Heart left ventricle (tissue), 16 donors: ENCODE measurements at regions of chr11 and their contacts with region 1.

Region 1: GRCh38 chr11:133712051-133712560 is 133.2 kb downstream of the SPATA19 start:
- DNase-seq: no peak
- ATAC-seq: peak in 2 of 4 donors; percentile 35 to 58
- H3K4me3 ChIP-seq: no peak overlapping the region
- H3K27ac ChIP-seq: peak overlapping the region in 3 of 12 donors; percentile 26 to 40 (median 29)
- H3K4me1 ChIP-seq: peaks cover 0 to 23% (median 8%) of the 10 kb centered on the region in 12 donors
- H3K27me3 ChIP-seq: no peaks in the 10 kb centered on the region
- CTCF ChIP-seq: no peak
- POLR2A ChIP-seq: no peak

Region 2: DNA sequence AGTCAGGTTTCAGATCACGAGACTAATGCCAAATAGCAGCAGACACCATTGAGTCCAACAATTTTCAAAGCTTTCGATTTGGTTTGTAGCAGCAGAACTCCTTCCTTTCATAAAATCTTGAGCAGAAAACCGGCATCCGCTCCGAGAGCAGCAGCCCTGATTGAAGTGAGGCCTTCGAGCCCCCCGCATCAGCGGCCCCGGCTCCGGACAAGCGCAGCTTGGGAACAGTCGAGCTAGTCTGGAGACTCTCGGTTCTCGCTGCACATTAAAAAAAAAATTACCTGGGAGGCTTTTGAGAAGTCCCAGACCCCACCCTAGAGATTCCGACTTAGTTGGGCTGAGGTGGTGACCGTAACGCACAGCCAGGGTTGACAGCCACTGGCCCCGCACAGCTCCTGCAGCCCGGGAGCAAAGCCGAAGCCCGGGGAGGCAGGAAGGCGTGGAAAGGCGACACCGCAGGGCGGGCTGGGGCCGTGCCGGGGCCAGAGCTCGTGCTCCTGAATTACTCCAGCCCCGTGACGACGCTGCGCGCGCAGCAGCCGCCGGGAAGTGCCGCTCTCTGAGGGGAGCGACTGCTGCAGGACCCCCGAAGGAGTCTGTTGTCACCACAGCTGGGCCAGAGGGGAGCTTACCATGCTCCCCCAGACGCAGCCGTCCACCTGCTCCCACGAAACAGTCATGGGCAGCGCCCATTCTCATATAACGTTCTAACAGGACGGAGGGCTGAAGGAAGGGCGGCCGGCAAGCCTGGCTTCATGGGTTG is 75.5 kb after region 1 on chr11:
- intact Hi-C with region 1: loop called in 1 of 10 experiments (anchors 5 kb)
- DNase-seq: peak in 4 of 5 donors; percentile 22 to 76 (median 58)
- ATAC-seq: peak; percentile 69 to 91 (median 74)
- H3K4me3 ChIP-seq: peak overlapping the region in 9 of 12 donors; percentile 24 to 49 (median 35)
- H3K27ac ChIP-seq: no peak overlapping the region
- H3K4me1 ChIP-seq: peaks cover 0 to 8% (median 0%) of the 10 kb centered on the region in 12 donors
- H3K27me3 ChIP-seq: peaks cover 0 to 40% (median 8%) of the 10 kb centered on the region in 9 donors
- CTCF ChIP-seq: no peak
- POLR2A ChIP-seq: no peak